Naive thymus-derived CD4-positive, alpha-beta T cell (primary cell): ENCODE measurements at regions of chr5 and their contacts with region 1.

Region 1: DNA sequence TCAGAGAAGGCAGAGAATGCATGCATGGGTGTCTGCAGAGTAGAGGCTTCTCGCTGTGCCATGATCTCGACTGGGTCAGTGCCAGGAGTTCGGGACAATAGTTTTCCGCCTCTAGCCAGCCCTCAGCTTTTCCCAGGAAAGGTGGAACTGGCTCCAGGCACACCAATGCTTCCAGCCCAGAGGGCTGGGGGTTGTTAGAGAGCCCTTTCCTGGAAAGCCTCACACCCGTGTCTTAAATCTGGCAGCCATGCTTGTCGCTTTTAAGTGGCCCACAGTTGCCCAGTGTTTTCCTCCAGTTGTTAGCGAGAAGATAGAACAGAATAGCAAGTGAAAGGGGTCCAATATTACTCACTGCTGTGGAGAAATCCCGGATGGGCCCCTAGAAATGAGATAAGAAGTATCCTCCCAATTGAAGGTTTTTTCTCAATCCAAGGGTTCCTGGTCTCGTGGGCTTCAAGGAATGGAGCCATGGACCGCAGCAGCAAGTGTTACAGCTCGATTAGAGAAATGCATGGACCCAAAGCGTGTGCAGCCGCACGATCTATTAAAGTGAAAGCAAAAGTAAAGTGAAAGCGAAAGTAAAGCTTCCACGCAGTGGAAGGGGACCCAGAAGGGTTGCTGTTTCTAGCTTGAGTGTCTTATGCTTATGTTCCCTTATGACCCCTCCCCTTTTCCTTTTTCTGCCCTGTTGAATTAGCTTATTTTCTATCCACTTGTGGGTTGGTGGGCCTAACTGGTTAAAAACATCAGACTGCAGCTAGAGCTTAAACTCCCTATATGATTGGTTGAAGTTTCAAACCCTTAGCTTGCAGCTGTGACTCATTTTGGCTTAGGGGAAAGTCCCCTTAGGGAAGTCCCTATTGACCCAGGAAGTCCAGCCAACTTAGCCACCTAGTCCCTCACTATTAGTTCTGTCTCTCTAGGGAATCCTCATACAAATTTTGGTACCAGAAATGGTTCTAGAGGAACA is 1111.7 kb downstream of the TAF11L14 start:
- DNase-seq: peak in 8 of 9 donors; percentile 41 to 70 (median 62)
- ATAC-seq: peak; percentile 85
- H3K4me3 ChIP-seq: peak overlapping the region; percentile 98
- H3K4me3 Mint-ChIP-seq: peak overlapping the region; percentile 89 to 97 (median 96)
- H3K27ac ChIP-seq: peak overlapping the region; percentile 79
- H3K27ac Mint-ChIP-seq: peak overlapping the region; percentile 90 to 99 (median 95)
- H3K4me1 ChIP-seq: peaks cover 25 to 29% of the 10 kb centered on the region in 2 donors
- H3K4me1 Mint-ChIP-seq: peaks cover 25 to 54% (median 52%) of the 10 kb centered on the region in 7 donors
- H3K27me3 ChIP-seq: no peaks in the 10 kb centered on the region
- H3K27me3 Mint-ChIP-seq: no peaks in the 10 kb centered on the region

Region 2: GRCh38 chr5:18761801-18762200 is 15.9 kb after region 1 on chr5:
- CTCF ChIA-PET with region 1: interaction called, 4 read pairs
- POLR2A ChIA-PET with region 1: interaction called, 6 read pairs
- intact Hi-C with region 1: loop called in 1 of 2 experiments (anchors 1 kb)
- DNase-seq: peak in 2 of 9 donors; percentile 12 to 32
- ATAC-seq: peak; percentile 44
- H3K4me3 ChIP-seq: no peak overlapping the region
- H3K4me3 Mint-ChIP-seq: no peak overlapping the region
- H3K27ac ChIP-seq: no peak overlapping the region
- H3K27ac Mint-ChIP-seq: no peak overlapping the region
- H3K4me1 ChIP-seq: no peaks in the 10 kb centered on the region
- H3K4me1 Mint-ChIP-seq: peaks cover 0 to 2% (median 0%) of the 10 kb centered on the region in 7 donors
- H3K27me3 ChIP-seq: no peaks in the 10 kb centered on the region
- H3K27me3 Mint-ChIP-seq: peaks cover 0 to 3% (median 0%) of the 10 kb centered on the region in 5 donors

Region 3: GRCh38 chr5:19031491-19031890 is 285.6 kb after region 1 on chr5:
- CTCF ChIA-PET with region 1: no interaction called
- POLR2A ChIA-PET with region 1: no interaction called
- intact Hi-C with region 1: no loop called
- DNase-seq: no peak
- ATAC-seq: no peak
- H3K4me3 ChIP-seq: no peak overlapping the region
- H3K4me3 Mint-ChIP-seq: no peak overlapping the region
- H3K27ac ChIP-seq: no peak overlapping the region
- H3K27ac Mint-ChIP-seq: no peak overlapping the region
- H3K4me1 ChIP-seq: no peaks in the 10 kb centered on the region
- H3K4me1 Mint-ChIP-seq: no peaks in the 10 kb centered on the region
- H3K27me3 ChIP-seq: no peaks in the 10 kb centered on the region
- H3K27me3 Mint-ChIP-seq: no peaks in the 10 kb centered on the region

Region 4: DNA sequence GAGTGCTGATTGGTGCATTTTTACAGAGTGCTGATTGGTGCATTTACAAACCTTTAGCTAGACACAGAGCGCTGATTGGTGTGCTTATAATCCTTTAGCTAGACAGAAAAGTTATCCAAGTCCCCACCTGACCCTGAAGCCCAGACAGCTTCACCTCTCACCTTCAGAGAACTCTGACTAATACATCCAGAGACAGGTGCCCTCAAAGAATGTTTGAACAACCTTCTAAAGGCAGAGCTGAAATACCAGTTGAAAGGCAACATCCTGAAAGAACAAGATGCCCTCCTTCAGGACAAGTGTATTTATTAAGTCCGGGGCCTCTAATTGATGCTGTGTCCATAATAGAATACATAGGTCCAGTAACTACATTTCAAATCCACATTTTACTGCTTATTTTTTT is 561.6 kb after region 1 on chr5:
- CTCF ChIA-PET with region 1: no interaction called
- POLR2A ChIA-PET with region 1: no interaction called
- intact Hi-C with region 1: no loop called
- DNase-seq: no peak
- ATAC-seq: no peak
- H3K4me3 ChIP-seq: no peak overlapping the region
- H3K4me3 Mint-ChIP-seq: no peak overlapping the region
- H3K27ac ChIP-seq: no peak overlapping the region
- H3K27ac Mint-ChIP-seq: no peak overlapping the region
- H3K4me1 ChIP-seq: no peaks in the 10 kb centered on the region
- H3K4me1 Mint-ChIP-seq: no peaks in the 10 kb centered on the region
- H3K27me3 ChIP-seq: no peaks in the 10 kb centered on the region
- H3K27me3 Mint-ChIP-seq: no peaks in the 10 kb centered on the region